BJ (cell line): ENCODE measurements at regions of chr9 and their contacts with region 1.

Region 1: DNA sequence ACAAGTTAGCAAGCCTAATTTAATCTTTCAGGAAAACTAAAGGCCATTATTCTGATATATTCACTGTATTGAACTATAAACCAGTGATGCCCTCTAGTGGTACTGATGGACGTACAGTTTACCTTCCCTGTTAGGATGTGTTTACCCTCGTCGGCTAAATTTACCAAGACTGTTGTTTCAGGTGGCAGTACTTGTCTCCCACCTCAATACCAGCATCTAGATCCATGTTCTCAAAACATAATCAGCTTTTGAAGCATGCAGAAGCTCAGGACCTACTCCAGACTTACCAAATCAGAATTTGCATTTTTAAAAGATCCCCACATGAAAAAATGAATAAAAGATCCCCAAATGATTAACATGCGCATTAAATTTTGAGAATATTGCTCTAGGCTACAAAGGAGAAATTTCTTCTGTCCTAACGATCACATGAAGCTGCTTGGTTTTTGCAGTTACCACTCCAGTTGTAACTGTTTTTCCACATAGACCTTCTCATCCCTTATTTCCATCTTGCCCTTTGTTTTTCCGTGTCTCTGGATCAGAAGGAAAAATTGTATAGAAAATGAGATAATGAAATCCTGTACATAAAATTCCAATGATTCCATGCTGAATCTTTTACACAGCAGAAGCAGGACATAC is 3.2 kb upstream of the BAAT start:
- DNase-seq: no peak
- H3K4me3 ChIP-seq: no peak overlapping the region
- H3K27me3 ChIP-seq: no peaks in the 10 kb centered on the region
- CTCF ChIP-seq: peak; percentile 69

Region 2: GRCh38 chr9:101398068-101398929 is 10.3 kb after region 1 on chr9 and contains the starts of genes MRPL50 and ZNF189:
- CTCF ChIA-PET with region 1: interaction called, 19 read pairs
- POLR2A ChIA-PET with region 1: no interaction called
- DNase-seq: peak; percentile 98
- H3K4me3 ChIP-seq: peak within 1 kb of the TSS; percentile 68
- H3K27me3 ChIP-seq: no peaks in the 10 kb centered on the region
- CTCF ChIP-seq: no peak
- polyA plus RNA-seq, gene MRPL50: 3.9 and 12.3 TPM in 2 replicates
- polyA plus RNA-seq, gene ZNF189: 3.1 and 7.5 TPM in 2 replicates